ENCODE measurements at regions of chr1 and their contacts with region 1.

Region 1: DNA sequence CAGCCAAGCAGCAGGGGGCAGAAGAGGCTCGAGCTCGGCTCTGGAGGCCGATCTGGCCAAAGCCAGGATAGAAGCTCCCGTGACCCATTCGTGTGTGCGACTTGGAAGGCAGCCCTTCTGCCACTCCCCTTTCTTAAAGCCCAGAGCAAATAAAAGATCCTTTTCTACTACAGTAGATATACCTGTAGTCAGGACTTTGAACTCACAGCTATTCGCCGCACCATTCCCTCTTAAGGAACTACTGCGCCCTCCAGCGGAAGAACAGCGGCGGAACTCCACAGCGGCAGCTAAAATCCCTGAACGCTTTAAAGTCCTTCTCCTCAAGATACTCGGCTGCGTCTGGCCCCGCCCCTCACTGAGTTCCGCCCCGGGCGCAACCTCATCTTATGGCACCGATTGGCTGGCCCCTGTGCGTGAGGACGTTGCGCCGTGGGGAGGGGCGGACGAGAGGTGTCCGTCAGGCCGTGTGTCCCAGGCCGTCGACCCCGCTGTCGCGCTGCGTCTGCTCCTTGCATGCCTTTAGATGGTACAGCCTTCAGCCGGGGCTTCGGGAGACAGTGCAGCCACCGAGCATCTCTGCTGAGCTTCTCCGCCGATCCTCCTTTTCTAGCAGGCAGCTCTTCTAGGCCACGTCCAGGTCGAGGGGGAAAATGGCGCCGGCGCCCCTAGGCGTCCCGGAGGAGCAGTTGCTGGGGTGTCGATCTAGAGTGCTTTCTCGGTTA is at the start of gene LRIG2:
- DNase-seq: peak; percentile 94 to 99 (median 98)
- ATAC-seq: peak; percentile 96
- H3K4me3 ChIP-seq: peak within 1 kb of the TSS; percentile 78
- H3K4me3 Mint-ChIP-seq: peak within 1 kb of the TSS; percentile 92
- H3K27ac ChIP-seq: peak within 1 kb of the TSS; percentile 74 to 75
- H3K27ac Mint-ChIP-seq: peak within 1 kb of the TSS; percentile 84
- H3K4me1 ChIP-seq: peaks cover 31% of the 10 kb centered on the region
- H3K4me1 Mint-ChIP-seq: peaks cover 34% of the 10 kb centered on the region
- H3K27me3 ChIP-seq: no peaks in the 10 kb centered on the region
- H3K27me3 Mint-ChIP-seq: no peaks in the 10 kb centered on the region
- CTCF ChIP-seq: peak; percentile 96
- total RNA-seq, gene LRIG2: 12.9 to 15.8 TPM

Region 2: DNA sequence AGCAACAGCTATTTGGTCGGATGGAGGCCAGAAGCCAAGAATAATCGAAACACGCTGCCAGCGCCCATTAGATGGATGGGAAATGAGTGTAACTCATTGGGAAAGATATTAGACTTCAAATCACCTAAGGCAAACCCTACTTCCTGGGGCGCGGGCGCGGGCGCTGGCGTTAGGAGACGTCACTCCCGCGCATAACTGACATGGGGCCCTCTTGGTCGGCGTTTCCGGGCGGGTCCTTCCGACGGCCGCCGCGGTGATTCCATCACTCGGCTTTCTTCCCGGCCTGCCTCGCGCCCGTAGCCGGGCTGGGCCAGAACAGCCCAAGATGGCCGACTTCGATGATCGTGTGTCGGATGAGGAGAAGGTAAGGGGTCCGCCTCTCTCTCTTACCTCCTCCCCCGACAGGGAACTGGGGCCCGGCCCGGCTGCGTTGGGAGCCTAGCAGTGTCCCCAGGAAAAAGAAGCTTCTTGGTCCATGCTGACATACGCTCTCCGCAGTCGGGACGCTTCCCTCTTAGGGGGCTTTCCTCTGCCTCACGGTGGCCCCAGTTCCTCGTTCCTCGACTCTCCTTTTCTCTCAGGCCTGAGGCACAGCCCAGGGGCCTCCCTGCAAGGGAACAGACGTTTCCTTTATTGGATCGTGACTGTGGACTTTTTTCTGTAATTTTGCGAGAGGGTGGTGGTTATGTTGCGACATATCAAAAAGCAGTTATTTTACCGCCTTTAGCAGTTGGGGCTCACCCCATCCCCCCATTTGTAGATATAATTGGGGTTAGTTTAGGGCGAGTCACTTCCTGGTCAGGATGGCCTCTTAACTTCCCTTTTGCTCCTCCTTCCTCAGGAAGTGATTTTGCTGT is 453.2 kb before region 1 on chr1 and contains the start of gene CAPZA1:
- CTCF ChIA-PET with region 1: no interaction called
- POLR2A ChIA-PET with region 1: interaction called, 3 read pairs
- intact Hi-C with region 1: loop called in 1 of 2 experiments (anchors 10 kb)
- DNase-seq: peak; percentile 80 to 96 (median 88)
- ATAC-seq: peak; percentile 67
- H3K4me3 ChIP-seq: peak within 1 kb of the TSS; percentile 69
- H3K4me3 Mint-ChIP-seq: peak within 1 kb of the TSS; percentile 100
- H3K27ac ChIP-seq: peak within 1 kb of the TSS; percentile 98 to 100
- H3K27ac Mint-ChIP-seq: peak within 1 kb of the TSS; percentile 95
- H3K4me1 ChIP-seq: peaks cover 38% of the 10 kb centered on the region
- H3K4me1 Mint-ChIP-seq: peaks cover 54% of the 10 kb centered on the region
- H3K27me3 ChIP-seq: no peaks in the 10 kb centered on the region
- H3K27me3 Mint-ChIP-seq: no peaks in the 10 kb centered on the region
- CTCF ChIP-seq: no peak
- total RNA-seq, gene CAPZA1: 166 to 179 TPM

Region 3: GRCh38 chr1:112836642-112837041 is 236.3 kb before region 1 on chr1:
- CTCF ChIA-PET with region 1: no interaction called
- POLR2A ChIA-PET with region 1: no interaction called
- intact Hi-C with region 1: no loop called
- DNase-seq: no peak
- ATAC-seq: no peak
- H3K4me3 ChIP-seq: no peak overlapping the region
- H3K4me3 Mint-ChIP-seq: no peak overlapping the region
- H3K27ac ChIP-seq: no peak overlapping the region
- H3K27ac Mint-ChIP-seq: no peak overlapping the region
- H3K4me1 ChIP-seq: peaks cover 7% of the 10 kb centered on the region
- H3K4me1 Mint-ChIP-seq: peaks cover 14% of the 10 kb centered on the region
- H3K27me3 ChIP-seq: peaks cover 0 to 3% of the 10 kb centered on the region in 2 experiments
- H3K27me3 Mint-ChIP-seq: peaks cover 12% of the 10 kb centered on the region
- CTCF ChIP-seq: no peak

Region 4: DNA sequence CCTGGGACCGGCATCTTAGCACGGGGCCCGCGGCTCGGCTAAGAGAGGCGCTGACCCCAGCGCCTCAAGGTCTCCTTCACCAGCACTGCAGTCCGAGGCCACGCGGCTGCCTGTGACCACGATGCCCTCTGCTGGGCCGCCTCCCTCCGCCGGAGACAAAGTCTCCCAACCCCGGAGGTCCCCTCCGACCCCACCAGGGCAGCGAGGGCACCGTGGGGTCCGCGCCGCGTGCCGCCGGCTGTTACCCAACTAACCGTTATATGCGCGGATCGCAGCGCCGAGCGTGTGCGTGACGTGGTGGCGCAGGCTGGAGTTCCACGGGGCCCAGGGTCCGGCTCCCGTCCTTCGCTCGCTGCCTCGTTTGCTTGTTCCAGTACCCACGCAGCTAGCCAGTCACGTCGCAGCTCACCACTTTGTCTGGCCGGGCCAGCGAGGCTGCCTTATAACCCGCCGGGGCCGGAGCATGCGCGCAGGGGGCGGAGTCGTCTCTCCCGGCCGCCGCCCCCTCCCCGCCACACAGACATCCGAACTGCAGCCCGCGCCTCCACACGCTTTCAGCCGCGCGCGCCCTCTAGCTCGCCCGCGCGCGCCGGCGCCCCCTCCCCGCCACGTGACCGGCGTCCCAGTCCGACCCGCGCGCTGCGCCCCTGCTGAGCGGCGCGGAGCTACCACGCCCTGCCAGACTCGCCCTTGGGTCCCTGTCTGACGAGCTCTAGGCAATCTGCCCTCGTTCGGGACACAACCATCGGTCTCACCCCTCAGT is 117.0 kb before region 1 on chr1 and contains the start of gene SLC16A1:
- CTCF ChIA-PET with region 1: interaction called, 20 read pairs
- POLR2A ChIA-PET with region 1: interaction called, 15 read pairs
- intact Hi-C with region 1: loop called (anchors 2 kb)
- DNase-seq: peak; percentile 78 to 95 (median 86)
- ATAC-seq: peak; percentile 74
- H3K4me3 ChIP-seq: peak within 1 kb of the TSS; percentile 86
- H3K4me3 Mint-ChIP-seq: peak within 1 kb of the TSS; percentile 98
- H3K27ac ChIP-seq: peak within 1 kb of the TSS; percentile 80 to 84
- H3K27ac Mint-ChIP-seq: peak within 1 kb of the TSS; percentile 76
- H3K4me1 ChIP-seq: peaks cover 35% of the 10 kb centered on the region
- H3K4me1 Mint-ChIP-seq: peaks cover 61% of the 10 kb centered on the region
- H3K27me3 ChIP-seq: no peaks in the 10 kb centered on the region
- H3K27me3 Mint-ChIP-seq: no peaks in the 10 kb centered on the region
- CTCF ChIP-seq: peak; percentile 14
- total RNA-seq, gene SLC16A1: 22.9 to 26.6 TPM

Region 5: DNA sequence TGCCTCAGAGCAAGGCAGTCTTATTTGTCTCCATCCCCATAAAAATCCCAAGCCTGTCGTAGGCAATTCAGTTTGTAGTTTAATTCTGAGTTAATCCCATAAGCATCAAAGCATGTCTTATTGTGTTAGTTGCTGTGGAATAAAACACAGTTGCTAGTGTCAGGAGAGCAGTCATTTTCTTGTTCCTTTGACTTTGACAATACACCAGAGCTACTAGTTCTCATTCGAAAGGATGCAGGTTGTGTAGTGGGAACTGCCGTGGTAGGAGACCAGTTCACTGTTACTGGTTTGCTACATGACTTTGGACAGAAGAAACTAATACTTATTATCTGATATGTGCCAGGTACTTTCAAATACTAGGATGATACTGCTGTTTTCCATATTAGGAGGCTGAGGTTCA is 23.6 kb after region 1 on chr1:
- CTCF ChIA-PET with region 1: interaction called, 17 read pairs
- POLR2A ChIA-PET with region 1: no interaction called
- intact Hi-C with region 1: no loop called
- DNase-seq: no peak
- ATAC-seq: no peak
- H3K4me3 ChIP-seq: no peak overlapping the region
- H3K4me3 Mint-ChIP-seq: no peak overlapping the region
- H3K27ac ChIP-seq: no peak overlapping the region
- H3K27ac Mint-ChIP-seq: no peak overlapping the region
- H3K4me1 ChIP-seq: no peaks in the 10 kb centered on the region
- H3K4me1 Mint-ChIP-seq: no peaks in the 10 kb centered on the region
- H3K27me3 ChIP-seq: no peaks in the 10 kb centered on the region
- H3K27me3 Mint-ChIP-seq: no peaks in the 10 kb centered on the region
- CTCF ChIP-seq: no peak

Region 6: DNA sequence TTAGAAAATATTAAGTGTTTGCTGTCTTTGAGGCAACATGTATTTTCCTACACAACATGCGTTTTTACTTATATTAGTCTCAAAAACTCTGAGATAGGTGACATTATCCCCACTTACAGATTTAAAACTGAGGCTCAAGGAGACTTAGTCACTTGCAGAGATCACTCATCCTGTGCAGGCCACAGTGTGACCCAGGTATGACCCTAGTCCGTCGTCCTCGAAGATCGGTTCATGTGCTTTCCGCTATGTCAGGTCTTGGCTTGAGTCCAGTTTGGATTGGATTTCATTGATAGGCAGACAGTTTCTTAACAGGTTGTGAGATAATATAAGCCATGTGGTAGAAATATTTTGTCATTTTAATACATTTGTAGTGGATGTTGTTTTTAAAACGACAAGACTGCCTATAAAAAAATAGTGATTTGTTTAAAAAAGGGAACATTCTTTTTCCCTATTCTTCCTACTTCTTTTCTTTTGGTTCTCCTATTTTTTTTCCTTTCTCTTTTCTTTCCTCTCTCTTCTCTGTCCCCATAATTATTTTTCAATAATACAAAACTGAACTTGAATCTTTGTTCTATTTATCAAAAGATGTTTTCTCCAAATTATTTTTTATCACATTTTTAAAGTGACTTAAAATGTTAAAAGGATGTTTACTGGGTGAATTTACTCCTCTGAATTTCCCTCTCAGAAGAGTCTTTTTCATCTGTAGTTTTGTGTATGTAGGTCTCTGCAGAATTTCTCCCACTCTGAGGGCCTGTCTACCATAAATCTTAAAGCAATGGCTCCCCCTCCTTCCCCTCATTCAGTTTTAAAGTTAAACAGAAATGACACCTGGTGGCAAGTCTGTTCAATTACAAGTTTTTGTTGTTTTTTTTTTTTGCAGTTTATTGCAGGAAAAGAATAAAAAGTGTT is 604.6 kb after region 1 on chr1:
- CTCF ChIA-PET with region 1: interaction called, 7 read pairs
- POLR2A ChIA-PET with region 1: no interaction called
- intact Hi-C with region 1: loop called in 1 of 2 experiments (anchors 10 kb)
- DNase-seq: peak in 4 of 14 experiments; percentile 3 to 58 (median 52)
- ATAC-seq: peak; percentile 49
- H3K4me3 ChIP-seq: no peak overlapping the region
- H3K4me3 Mint-ChIP-seq: no peak overlapping the region
- H3K27ac ChIP-seq: no peak overlapping the region
- H3K27ac Mint-ChIP-seq: no peak overlapping the region
- H3K4me1 ChIP-seq: no peaks in the 10 kb centered on the region
- H3K4me1 Mint-ChIP-seq: no peaks in the 10 kb centered on the region
- H3K27me3 ChIP-seq: no peaks in the 10 kb centered on the region
- H3K27me3 Mint-ChIP-seq: no peaks in the 10 kb centered on the region
- CTCF ChIP-seq: peak; percentile 69

Region 7: DNA sequence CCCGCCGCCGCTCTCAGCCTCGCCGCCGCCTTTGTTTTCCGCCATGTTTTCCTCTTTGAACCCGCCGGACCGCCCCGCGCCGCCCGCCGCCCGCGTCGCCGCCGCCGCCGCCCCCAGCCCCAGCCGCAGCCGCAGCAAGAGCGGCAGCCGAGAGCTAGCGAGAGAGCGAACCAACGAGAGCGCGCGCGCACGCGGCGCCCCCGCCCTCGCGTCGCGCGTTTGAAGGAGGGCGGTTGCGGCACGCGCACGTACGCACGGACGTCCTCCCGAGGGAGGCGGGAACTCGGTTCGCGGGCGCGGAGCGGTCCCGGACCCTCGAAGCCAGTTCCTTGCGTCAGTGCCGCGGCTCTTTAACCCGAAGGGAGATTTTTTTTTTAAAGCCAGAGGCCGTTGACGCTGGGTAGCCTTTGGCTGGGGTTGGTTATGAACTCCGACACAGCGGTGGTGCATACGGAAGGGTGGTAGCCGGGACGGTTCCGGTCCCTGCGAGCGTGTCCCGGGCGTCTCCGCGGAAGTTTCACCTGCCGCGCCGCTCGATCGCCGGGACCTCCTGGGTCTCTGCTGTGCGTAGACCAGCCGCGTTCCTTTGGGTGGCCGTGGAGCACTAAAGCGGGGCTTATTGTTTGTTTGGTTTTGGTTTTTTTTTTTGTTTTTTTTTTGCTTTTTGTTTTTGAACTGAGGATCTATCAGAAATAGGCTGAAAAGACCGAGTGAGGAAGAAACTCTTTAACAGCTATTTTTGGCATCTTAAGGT is 1438.3 kb after region 1 on chr1 and contains the start of gene TRIM33:
- CTCF ChIA-PET with region 1: no interaction called
- POLR2A ChIA-PET with region 1: no interaction called
- intact Hi-C with region 1: loop called in 1 of 2 experiments (anchors 5 kb)
- DNase-seq: peak; percentile 84 to 98 (median 90)
- ATAC-seq: peak; percentile 66
- H3K4me3 ChIP-seq: peak within 1 kb of the TSS; percentile 86
- H3K4me3 Mint-ChIP-seq: peak within 1 kb of the TSS; percentile 100
- H3K27ac ChIP-seq: peak within 1 kb of the TSS; percentile 95 to 99
- H3K27ac Mint-ChIP-seq: peak within 1 kb of the TSS; percentile 100
- H3K4me1 ChIP-seq: peaks cover 43% of the 10 kb centered on the region
- H3K4me1 Mint-ChIP-seq: peaks cover 48% of the 10 kb centered on the region
- H3K27me3 ChIP-seq: no peaks in the 10 kb centered on the region
- H3K27me3 Mint-ChIP-seq: no peaks in the 10 kb centered on the region
- CTCF ChIP-seq: no peak
- total RNA-seq, gene TRIM33: 42.6 to 45.0 TPM

Measured in CD4-positive, alpha-beta T cell (primary cell).